ENCODE measurements at regions of chr21 and their contacts with region 1.

Region 1: GRCh38 chr21:38126669-38127303 is 130.0 kb upstream of the KCNJ15 start:
- DNase-seq: peak; percentile 78
- H3K4me3 Mint-ChIP-seq: no peak overlapping the region
- H3K27ac Mint-ChIP-seq: no peak overlapping the region
- H3K4me1 Mint-ChIP-seq: peaks cover 3% of the 10 kb centered on the region
- H3K27me3 Mint-ChIP-seq: no peaks in the 10 kb centered on the region
- CTCF ChIP-seq: peak; percentile 68

Region 2: GRCh38 chr21:37758982-37759381 is 367.8 kb before region 1 on chr21:
- CTCF ChIA-PET with region 1: interaction called, 9 read pairs
- POLR2A ChIA-PET with region 1: no interaction called
- intact Hi-C with region 1: loop called (anchors 1 kb)
- DNase-seq: peak; percentile 54
- H3K4me3 Mint-ChIP-seq: no peak overlapping the region
- H3K27ac Mint-ChIP-seq: no peak overlapping the region
- H3K4me1 Mint-ChIP-seq: peaks cover 8% of the 10 kb centered on the region
- H3K27me3 Mint-ChIP-seq: peaks cover 21% of the 10 kb centered on the region
- CTCF ChIP-seq: peak; percentile 73

Region 3: GRCh38 chr21:37916310-37917051 is 210.3 kb before region 1 on chr21 and contains the start of gene KCNJ6:
- CTCF ChIA-PET with region 1: interaction called, 3 read pairs
- POLR2A ChIA-PET with region 1: no interaction called
- intact Hi-C with region 1: loop called (anchors 2 kb)
- DNase-seq: peak; percentile 48
- H3K4me3 Mint-ChIP-seq: peak within 1 kb of the TSS; percentile 70
- H3K27ac Mint-ChIP-seq: no peak within 1 kb of the TSS
- H3K4me1 Mint-ChIP-seq: peaks cover 11% of the 10 kb centered on the region
- H3K27me3 Mint-ChIP-seq: peaks cover 31% of the 10 kb centered on the region
- CTCF ChIP-seq: peak; percentile 84
- total RNA-seq, gene KCNJ6: 0.20 and 0.28 TPM in 2 replicates

Region 4: DNA sequence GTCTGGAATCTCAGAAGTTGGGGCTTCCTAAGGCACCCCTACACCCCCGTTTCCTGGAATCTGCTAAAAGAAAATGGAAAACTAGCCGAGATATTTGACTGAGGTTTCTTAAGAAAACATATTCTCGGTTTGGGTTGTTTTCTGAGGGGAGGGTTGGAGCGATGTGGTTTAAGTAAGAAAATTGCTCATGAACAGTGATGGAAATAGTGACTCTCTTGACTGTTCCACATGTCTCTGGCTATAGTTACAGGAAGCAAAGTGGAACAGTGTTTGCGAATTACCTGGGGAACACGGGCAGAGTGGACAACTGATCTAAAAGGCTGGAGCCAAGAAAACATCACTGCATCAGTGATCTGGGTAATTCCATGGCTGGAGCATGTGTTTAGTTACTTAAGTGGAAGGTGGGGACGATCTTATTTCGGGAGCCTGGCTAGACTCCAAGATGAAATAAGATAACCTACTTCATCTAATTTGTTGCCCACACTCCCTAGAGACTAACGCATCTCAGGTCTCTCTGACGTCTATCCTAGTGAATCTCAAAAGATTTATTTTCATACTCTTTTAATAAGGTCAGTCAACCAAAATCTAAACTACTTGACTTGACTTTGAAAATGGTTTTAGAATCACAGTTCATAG is 222.4 kb after region 1 on chr21:
- CTCF ChIA-PET with region 1: interaction called, 12 read pairs
- POLR2A ChIA-PET with region 1: interaction called, 3 read pairs
- intact Hi-C with region 1: no loop called
- DNase-seq: no peak
- H3K4me3 Mint-ChIP-seq: no peak overlapping the region
- H3K27ac Mint-ChIP-seq: no peak overlapping the region
- H3K4me1 Mint-ChIP-seq: peaks cover 16% of the 10 kb centered on the region
- H3K27me3 Mint-ChIP-seq: no peaks in the 10 kb centered on the region
- CTCF ChIP-seq: no peak

Region 5: GRCh38 chr21:39612233-39613040 is 1485.7 kb after region 1 on chr21 and contains the start of gene B3GALT5:
- CTCF ChIA-PET with region 1: no interaction called
- POLR2A ChIA-PET with region 1: no interaction called
- intact Hi-C with region 1: no loop called
- DNase-seq: no peak
- H3K4me3 Mint-ChIP-seq: peak within 1 kb of the TSS; percentile 12
- H3K27ac Mint-ChIP-seq: no peak within 1 kb of the TSS
- H3K4me1 Mint-ChIP-seq: peaks cover 5% of the 10 kb centered on the region
- H3K27me3 Mint-ChIP-seq: no peaks in the 10 kb centered on the region
- CTCF ChIP-seq: no peak
- total RNA-seq, gene B3GALT5: 0.05 TPM in 1 of 2 replicates, not detected in the other